Breast epithelium (tissue), 4 donors: ENCODE measurements at regions of chr9 and their contacts with region 1.

Region 1: DNA sequence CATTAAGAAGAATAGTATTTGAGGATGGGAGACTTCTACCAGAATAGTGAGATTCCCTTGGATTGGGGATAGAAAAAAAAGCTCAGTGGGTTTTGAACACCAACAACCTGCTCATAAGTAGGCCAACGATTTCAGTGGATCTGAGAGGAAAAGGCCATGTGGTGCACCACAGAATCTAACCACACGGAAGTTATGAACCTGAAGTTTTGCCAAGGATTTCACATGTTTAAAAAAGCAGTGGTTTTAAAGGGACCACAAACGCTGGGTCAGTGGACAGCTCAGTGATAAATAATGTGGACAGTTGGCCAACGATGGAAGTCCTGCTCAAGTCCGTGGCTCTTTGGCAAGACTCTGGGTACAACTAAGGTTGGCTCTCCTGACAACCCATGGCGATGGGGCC is 107.2 kb upstream of the TXNDC8 start:
- DNase-seq: no peak
- H3K4me3 ChIP-seq: no peak overlapping the region
- H3K27ac ChIP-seq: no peak overlapping the region
- H3K4me1 ChIP-seq: no peaks in the 10 kb centered on the region
- H3K27me3 ChIP-seq: no peaks in the 10 kb centered on the region
- CTCF ChIP-seq: no peak
- POLR2A ChIP-seq: no peak

Region 2: GRCh38 chr9:109328978-109329637 is 1115.8 kb before region 1 on chr9:
- intact Hi-C with region 1: no loop called
- DNase-seq: peak; percentile 81 to 89
- H3K4me3 ChIP-seq: peak overlapping the region in 2 of 3 donors; percentile 12 to 38
- H3K27ac ChIP-seq: peak overlapping the region; percentile 87 to 93
- H3K4me1 ChIP-seq: peaks cover 0 to 4% of the 10 kb centered on the region in 2 donors
- H3K27me3 ChIP-seq: no peaks in the 10 kb centered on the region
- CTCF ChIP-seq: no peak
- POLR2A ChIP-seq: no peak

Region 3: DNA sequence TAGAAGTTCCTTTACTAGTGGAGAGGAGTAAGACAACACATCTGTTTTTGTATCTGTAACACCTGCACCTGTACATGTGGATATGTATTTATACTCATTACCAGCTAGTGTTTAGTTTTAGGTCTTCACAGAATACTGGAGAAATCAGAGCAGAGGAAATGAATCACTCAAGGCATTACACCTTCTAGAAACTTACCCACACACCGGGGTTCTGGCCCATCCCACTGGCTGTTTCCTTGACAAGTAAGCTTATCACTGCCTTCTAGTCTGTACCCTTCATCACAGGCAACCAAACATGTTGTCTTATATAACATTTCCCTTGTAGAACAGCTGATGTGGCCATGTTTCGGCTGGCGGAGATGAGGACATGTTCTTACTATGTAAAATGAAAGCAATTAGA is 57.9 kb after region 1 on chr9:
- intact Hi-C with region 1: loop called (anchors 5 kb)
- DNase-seq: no peak
- H3K4me3 ChIP-seq: no peak overlapping the region
- H3K27ac ChIP-seq: no peak overlapping the region
- H3K4me1 ChIP-seq: no peaks in the 10 kb centered on the region
- H3K27me3 ChIP-seq: no peaks in the 10 kb centered on the region
- CTCF ChIP-seq: no peak
- POLR2A ChIP-seq: no peak

Region 4: GRCh38 chr9:111897601-111898137 is 1452.8 kb after region 1 on chr9:
- intact Hi-C with region 1: no loop called
- DNase-seq: no peak
- H3K4me3 ChIP-seq: peak overlapping the region; percentile 90 to 98 (median 94)
- H3K27ac ChIP-seq: peak overlapping the region; percentile 93 to 96
- H3K4me1 ChIP-seq: peaks cover 0 to 7% of the 10 kb centered on the region in 2 donors
- H3K27me3 ChIP-seq: no peaks in the 10 kb centered on the region
- CTCF ChIP-seq: no peak
- POLR2A ChIP-seq: no peak